Dorsolateral prefrontal cortex (tissue), 120 donors: ENCODE measurements at regions of chr18 and their contacts with region 1.

Region 1: GRCh38 chr18:59402432-59403090 is 43.5 kb upstream of the LMAN1 start:
- DNase-seq: peak; percentile 50 to 82 (median 72)
- H3K4me3 ChIP-seq: no peak overlapping the region
- H3K27ac ChIP-seq: no peak overlapping the region
- H3K27me3 ChIP-seq: no peaks in the 10 kb centered on the region
- CTCF ChIP-seq: peak; percentile 57 to 98 (median 91)

Region 2: DNA sequence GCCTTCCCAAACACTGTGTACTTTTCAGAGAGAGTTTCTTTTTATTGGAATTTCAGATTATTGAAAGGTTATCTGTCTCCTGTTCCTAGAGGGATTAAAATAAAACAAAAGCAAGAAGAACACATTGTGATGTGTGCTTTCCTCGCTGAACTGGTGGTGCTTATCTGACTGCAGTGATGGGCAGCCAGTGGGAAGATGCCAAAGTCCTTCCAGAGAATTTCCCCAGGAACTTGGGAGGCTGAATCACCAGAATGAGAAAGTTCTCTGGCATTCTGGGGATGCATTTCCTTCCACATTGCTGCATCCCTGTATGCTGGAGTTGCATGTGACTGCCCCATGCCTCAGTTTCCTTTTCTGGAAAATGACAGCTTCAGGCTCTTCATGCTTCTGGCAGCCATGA is 316.8 kb before region 1 on chr18:
- intact Hi-C with region 1: loop called in 1 of 2 experiments (anchors 10 kb)
- DNase-seq: no peak
- H3K4me3 ChIP-seq: no peak overlapping the region
- H3K27ac ChIP-seq: no peak overlapping the region
- H3K27me3 ChIP-seq: no peaks in the 10 kb centered on the region
- CTCF ChIP-seq: no peak

Region 3: DNA sequence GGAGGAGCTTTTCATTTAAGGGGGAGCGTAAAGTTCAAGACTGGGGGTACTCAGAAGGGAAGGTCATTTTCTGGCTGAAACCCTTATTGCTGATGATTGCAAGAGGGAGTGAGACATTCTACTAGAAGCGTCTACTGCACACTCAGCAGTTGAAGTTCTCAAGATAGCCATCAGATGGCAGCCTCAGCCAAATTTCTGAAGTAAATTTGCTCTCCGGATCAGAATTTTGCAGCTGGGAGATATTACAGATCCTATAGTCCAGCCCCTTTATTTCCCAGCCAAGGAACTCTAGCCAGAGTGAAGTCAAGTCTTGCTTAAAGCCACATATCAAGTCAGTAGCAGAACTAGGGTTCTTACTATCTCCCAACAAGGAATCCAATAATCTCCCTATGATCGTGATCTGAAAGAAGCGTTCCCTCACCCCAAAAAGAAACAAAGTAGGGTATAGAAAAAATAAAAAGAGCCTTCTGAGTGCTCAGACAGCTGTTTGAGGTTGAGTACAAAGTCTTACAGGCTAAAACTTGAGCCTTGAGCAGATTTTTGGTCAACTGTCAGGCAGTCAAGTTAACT is 153.3 kb before region 1 on chr18:
- intact Hi-C with region 1: loop called (anchors 5 kb)
- DNase-seq: peak in 3 of 10 donors; percentile 18 to 57 (median 41)
- H3K4me3 ChIP-seq: no peak overlapping the region
- H3K27ac ChIP-seq: no peak overlapping the region
- H3K27me3 ChIP-seq: peaks cover 0 to 37% (median 4%) of the 10 kb centered on the region in 45 donors
- CTCF ChIP-seq: peak; percentile 52 to 91 (median 80)

Region 4: DNA sequence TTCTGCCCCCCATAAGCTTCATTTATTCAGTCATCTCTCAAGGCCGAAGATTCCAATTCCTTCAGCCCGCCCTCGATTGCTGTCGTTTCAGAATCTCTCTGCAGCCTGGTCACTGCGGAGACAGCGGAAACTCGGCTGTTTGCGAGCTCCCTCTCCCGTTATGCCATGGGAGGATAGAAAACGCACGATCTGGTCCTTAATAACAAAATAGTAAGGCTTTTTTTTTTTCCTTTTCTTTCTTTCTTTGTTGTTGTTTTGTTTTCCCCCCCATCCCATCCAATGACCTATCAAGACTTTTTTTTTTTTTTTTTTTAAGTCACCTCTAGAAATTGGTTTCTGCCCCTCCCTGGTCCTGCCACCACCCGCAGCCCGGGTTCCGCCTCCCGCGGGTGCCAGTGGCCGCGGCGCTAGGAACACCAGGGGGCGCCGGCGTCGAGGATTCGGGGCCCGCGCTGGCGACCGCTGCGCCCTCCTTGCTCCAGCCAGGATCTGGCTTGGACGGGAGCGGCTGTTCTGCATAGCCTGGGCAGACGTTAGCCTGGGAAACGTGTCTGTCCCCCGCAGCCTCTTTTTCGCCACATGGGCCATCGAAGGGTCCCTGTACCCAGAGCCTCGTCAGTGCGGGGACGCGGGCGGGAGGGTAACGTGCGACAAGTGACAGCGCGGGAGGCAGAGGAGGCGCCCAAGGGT is 94.2 kb before region 1 on chr18:
- intact Hi-C with region 1: loop called (anchors 5 to 10 kb)
- DNase-seq: peak in 9 of 10 donors; percentile 26 to 84 (median 52)
- H3K4me3 ChIP-seq: peak overlapping the region in 51 of 59 donors; percentile 4 to 57 (median 38)
- H3K27ac ChIP-seq: no peak overlapping the region
- H3K27me3 ChIP-seq: peaks cover 0 to 65% (median 24%) of the 10 kb centered on the region in 45 donors
- CTCF ChIP-seq: peak in 55 of 56 donors; percentile 30 to 88 (median 73)